GM10248 (cell line): ENCODE measurements at regions of chr5 and their contacts with region 1.

Region 1: DNA sequence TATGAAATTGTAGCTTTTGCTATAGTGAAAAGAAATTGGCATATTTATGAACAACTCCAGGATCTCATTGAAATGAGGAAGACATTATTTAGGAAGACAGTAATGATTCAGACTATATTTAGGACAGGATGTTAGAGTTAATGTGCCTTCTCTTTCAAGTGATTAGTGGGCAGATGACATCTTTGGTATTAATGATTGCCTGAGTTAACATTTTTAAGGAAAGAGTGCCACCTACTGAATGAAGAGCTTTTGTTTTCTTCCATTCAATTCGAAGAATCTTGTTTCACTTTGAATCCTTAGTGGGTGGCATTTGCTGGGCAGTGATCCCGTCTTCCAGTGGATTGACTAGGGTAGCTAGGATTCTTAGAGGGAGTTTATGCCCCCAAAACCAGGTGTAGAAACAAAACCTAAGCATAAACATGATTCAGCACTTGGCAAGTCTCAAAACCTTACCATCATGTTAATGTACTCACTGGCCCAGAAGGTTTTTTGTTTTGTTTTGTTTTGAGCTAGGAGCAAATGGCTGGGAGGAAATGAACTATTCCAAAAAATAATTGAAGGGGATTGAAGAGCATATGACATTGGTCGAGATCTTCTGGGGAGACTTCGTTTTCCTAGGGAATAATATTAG is 23.2 kb downstream of the MAP3K1 start:
- DNase-seq: peak; percentile 28
- CTCF ChIP-seq: peak; percentile 35

Region 2: GRCh38 chr5:55936100-55936693 is 902.3 kb before region 1 on chr5:
- CTCF ChIA-PET with region 1: interaction called, 10 read pairs
- POLR2A ChIA-PET with region 1: no interaction called
- DNase-seq: peak; percentile 62
- CTCF ChIP-seq: peak; percentile 86

Region 3: DNA sequence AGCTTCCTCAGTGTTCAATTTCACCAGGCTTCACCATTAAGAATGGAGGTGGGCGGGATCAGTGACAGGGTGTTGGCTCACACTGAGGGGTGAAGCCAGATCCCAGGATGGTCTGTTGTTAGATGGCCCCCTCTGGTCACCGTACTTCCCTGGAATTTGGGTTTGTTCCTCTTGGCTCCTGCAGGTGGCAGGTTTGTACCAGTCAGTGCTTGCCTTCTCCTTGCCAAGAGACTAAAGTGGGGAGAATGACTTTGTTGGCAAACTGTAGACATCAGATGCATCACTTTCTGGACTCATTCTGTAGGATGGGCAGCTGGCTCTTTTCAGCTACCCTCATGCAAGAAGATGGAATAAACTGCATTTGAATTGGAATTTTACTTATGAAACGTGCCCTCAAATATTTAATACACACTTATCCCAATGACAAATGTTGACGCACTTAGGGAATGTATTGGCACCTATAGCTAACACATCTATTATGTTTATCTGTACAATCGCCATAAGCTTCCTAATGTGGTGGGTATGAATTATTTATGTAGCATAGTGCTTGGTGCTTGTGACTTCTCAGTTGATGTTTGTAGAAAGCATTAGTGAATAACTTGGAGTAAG is 574.0 kb before region 1 on chr5:
- CTCF ChIA-PET with region 1: interaction called, 105 read pairs
- POLR2A ChIA-PET with region 1: no interaction called
- DNase-seq: no peak
- CTCF ChIP-seq: peak; percentile 35

Region 4: GRCh38 chr5:56827049-56827448 is 11.5 kb before region 1 on chr5:
- CTCF ChIA-PET with region 1: interaction called, 63 read pairs
- POLR2A ChIA-PET with region 1: no interaction called
- DNase-seq: no peak
- CTCF ChIP-seq: no peak

Region 5: GRCh38 chr5:56852228-56853000 is 13.9 kb after region 1 on chr5:
- CTCF ChIA-PET with region 1: interaction called, 18 read pairs
- POLR2A ChIA-PET with region 1: interaction called, 5 read pairs
- DNase-seq: no peak
- CTCF ChIP-seq: no peak

Region 6: GRCh38 chr5:57383093-57383861 is 544.8 kb after region 1 on chr5:
- CTCF ChIA-PET with region 1: no interaction called
- POLR2A ChIA-PET with region 1: no interaction called
- DNase-seq: no peak
- CTCF ChIP-seq: no peak